ENCODE measurements at regions of chr7 and their contacts with region 1.

Region 1: DNA sequence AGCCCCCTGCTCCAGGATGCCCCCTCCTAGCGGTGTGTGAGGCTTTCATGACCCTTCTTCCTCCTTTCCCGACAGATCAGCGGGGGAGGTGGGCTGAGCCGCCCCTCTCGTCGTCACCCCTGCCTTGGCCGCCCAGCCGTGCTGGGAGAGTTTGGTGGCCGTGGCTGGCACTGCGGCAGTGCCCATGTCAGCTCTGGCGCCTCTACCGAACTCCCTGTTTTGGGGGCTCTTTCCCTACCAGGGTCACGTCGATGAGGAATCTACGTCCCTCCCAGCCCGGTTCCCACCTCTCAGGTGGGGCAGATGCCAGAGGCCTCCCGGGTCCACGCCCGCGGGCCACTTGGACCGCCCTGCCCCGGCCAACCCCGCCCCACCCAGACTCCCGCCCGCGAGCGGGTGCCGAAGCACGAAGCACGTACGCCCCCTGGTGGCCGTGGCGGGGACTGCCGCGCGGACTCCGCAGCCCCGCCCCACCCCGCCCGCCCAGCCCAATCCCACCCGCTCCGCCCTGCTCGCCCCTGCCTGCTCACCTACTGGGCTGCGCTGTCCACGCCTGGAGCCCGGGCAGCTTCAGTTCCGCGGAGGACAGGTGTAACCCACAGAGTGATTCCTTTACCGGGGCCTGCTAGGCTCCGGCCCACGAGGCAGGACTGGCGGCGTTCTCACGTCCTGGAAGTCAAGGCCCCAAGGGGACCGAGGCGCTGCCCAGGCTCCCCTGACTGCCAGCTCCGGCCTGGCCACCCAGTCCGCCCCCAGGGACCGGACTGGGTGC is 127.1 kb downstream of the UBE2H start:
- DNase-seq: peak; percentile 91 to 95
- H3K4me3 ChIP-seq: peak overlapping the region; percentile 53 to 74 (median 62)
- H3K27ac ChIP-seq: peak overlapping the region in 4 of 5 donors; percentile 23 to 69 (median 62)
- H3K4me1 ChIP-seq: peaks cover 25 to 36% (median 27%) of the 10 kb centered on the region in 4 donors
- H3K27me3 ChIP-seq: no peaks in the 10 kb centered on the region
- CTCF ChIP-seq: peak in 5 of 7 experiments; percentile 48 to 100 (median 100)
- EP300 ChIP-seq: no peak
- POLR2A ChIP-seq: no peak

Region 2: GRCh38 chr7:129664029-129665012 is 161.4 kb before region 1 on chr7:
- intact Hi-C with region 1: loop called (anchors 10 kb)
- DNase-seq: peak in 1 of 2 donors; percentile 70
- H3K4me3 ChIP-seq: no peak overlapping the region
- H3K27ac ChIP-seq: no peak overlapping the region
- H3K4me1 ChIP-seq: peaks cover 0 to 13% (median 0%) of the 10 kb centered on the region in 4 donors
- H3K27me3 ChIP-seq: no peaks in the 10 kb centered on the region
- CTCF ChIP-seq: peak in 3 of 7 experiments; percentile 30 to 54 (median 50)
- EP300 ChIP-seq: no peak
- POLR2A ChIP-seq: no peak

Region 3: DNA sequence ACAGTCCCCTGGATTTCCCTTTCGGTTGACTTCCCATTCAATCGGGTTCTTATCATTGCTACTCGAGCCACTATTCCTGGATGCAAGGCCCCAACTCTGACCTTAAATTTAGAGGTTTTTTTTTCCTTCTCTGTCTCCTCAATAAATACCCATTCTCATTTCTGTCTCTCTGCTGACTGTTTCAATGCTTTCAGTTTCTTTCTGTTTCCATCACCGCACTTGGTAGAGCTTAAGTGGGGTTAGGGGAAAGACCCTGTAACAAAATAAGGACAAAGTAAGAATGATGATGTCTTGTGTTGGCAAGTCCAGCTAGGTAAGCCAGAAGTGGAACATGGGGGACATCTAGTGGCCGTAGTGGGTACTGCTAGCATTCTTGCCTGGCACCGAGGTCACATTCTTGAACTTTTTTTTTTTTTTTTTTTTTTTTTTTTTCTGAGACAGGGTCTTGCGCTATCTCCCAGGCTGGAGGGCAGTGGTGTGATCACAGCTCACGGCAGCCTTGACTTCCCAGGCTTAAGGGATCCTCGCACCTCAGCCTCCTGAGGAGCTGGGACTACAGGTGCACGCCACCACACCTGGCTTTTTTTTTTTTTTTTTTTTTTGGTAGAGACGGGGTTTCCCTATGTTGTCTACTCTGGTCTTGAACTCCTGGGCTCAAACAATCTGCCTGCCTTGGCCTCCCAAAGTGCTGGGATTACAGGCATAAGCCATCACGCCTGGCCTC is 185.2 kb after region 1 on chr7:
- intact Hi-C with region 1: loop called (anchors 10 kb)
- DNase-seq: peak; percentile 90 to 96
- H3K4me3 ChIP-seq: no peak overlapping the region
- H3K27ac ChIP-seq: peak overlapping the region; percentile 48 to 88 (median 78)
- H3K4me1 ChIP-seq: peaks cover 20 to 27% (median 23%) of the 10 kb centered on the region in 4 donors
- H3K27me3 ChIP-seq: no peaks in the 10 kb centered on the region
- CTCF ChIP-seq: peak in 6 of 7 experiments; percentile 60 to 97 (median 88)
- EP300 ChIP-seq: no peak
- POLR2A ChIP-seq: no peak